Activated CD4-positive, alpha-beta T cell treated with anti-CD3 and anti-CD28 coated beads for 36 hours (primary cell): ENCODE measurements at regions of chr7 and their contacts with region 1.

Region 1: DNA sequence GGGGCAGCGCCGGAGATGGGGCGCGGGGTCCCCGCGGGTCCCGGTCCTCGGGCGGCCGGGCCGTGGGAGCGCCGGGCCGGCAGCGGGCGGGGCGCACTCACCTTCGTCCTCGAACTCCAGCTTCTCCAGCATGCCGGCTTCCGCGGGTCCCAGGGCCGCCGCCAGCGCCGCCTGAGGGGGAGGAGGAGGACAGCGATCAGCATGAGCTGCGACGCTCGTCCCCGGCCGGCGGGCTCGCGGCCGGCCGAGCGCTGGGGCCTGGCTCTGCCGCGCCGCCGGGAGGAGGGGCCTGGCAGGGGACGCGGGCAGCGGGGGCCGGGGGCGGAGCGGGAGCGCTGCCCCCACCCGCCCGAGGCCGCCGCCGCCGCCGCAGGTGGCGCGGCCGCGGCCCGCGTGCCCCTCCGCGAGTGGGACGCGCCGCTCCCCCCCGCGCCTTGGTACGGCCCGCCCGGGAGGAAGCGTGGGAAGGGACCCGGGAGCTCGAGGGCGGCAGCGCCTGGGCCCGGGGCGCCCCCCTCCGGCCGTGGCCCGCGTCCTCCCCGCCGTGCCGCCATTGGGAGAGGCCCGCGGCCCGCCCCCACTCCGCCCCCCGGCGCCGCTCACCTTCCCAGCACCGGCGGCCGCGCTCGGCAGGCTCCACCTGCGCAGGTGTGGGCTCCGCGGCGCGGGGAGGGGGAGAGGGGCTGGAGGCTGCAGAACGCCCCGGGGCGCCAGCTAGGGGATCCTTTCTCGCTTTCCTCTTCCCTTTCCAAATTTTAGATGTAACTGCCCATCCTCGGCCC is 112.5 kb upstream of the RHEB start:
- DNase-seq: peak; percentile 91
- ATAC-seq: peak; percentile 72
- H3K4me3 Mint-ChIP-seq: peak overlapping the region; percentile 92
- H3K27ac Mint-ChIP-seq: peak overlapping the region; percentile 98
- H3K4me1 Mint-ChIP-seq: peaks cover 22% of the 10 kb centered on the region
- H3K27me3 Mint-ChIP-seq: no peaks in the 10 kb centered on the region

Region 2: DNA sequence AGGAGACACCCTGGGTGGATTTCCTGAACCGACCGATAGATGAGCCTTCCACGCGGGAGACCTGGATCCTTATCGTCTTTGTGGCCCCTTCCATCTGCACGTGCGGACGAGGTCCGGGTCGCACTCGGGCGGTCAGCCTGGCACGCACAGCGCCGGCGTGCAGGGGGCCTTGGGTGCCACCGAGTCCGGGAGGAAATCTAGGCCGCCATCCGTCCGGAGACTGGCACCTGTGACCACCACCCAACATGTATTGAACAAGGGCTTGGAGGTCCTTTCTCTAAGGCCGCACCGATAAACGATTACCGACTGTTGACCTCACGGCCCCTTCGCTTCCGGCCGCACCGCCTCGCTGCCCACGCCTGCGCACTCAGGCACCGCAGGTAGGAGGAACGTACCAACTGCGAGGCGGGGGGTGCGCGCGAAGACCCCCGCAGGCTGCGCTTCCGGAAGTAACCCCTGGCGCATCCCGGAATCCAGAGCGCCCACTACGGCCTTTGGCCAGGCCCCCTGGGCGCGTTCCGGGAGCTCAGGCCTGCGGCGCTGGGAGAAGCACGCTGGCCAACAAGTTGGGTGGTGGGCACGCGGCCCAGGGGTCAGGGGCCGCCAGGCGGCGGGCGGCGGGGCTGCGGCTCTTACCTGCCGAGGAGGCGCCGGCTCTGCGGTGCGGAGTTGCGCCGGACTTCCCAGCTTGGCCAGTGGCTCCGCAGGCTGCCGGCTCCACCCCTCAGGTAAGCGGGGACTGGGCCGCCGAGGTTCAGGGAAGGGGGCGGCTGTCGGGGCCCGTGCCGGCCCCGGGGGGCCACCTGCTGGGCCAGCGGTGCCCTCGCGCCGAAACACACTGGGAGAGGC is 1309.1 kb before region 1 on chr7 and contains the starts of genes ACTR3C and LRRC61:
- CTCF ChIA-PET with region 1: no interaction called
- POLR2A ChIA-PET with region 1: no interaction called
- intact Hi-C with region 1: loop called in 1 of 2 experiments (anchors 5 kb)
- DNase-seq: peak; percentile 78
- ATAC-seq: peak; percentile 24
- H3K4me3 Mint-ChIP-seq: peak within 1 kb of the TSS; percentile 91
- H3K27ac Mint-ChIP-seq: peak within 1 kb of the TSS; percentile 99
- H3K4me1 Mint-ChIP-seq: peaks cover 52% of the 10 kb centered on the region
- H3K27me3 Mint-ChIP-seq: no peaks in the 10 kb centered on the region
- total RNA-seq, gene ACTR3C: 3.2 to 4.7 TPM
- total RNA-seq, gene LRRC61: 13.0 to 17.4 TPM

Region 3: GRCh38 chr7:151232091-151232916 is 399.9 kb before region 1 on chr7 and contains the start of gene CHPF2:
- CTCF ChIA-PET with region 1: no interaction called
- POLR2A ChIA-PET with region 1: interaction called, 3 read pairs
- intact Hi-C with region 1: loop called in 1 of 2 experiments (anchors 2 kb)
- DNase-seq: peak; percentile 95
- ATAC-seq: peak; percentile 90
- H3K4me3 Mint-ChIP-seq: peak within 1 kb of the TSS; percentile 98
- H3K27ac Mint-ChIP-seq: peak within 1 kb of the TSS; percentile 99
- H3K4me1 Mint-ChIP-seq: peaks cover 34% of the 10 kb centered on the region
- H3K27me3 Mint-ChIP-seq: no peaks in the 10 kb centered on the region
- total RNA-seq, gene CHPF2: 20.7 to 27.3 TPM

Region 4: DNA sequence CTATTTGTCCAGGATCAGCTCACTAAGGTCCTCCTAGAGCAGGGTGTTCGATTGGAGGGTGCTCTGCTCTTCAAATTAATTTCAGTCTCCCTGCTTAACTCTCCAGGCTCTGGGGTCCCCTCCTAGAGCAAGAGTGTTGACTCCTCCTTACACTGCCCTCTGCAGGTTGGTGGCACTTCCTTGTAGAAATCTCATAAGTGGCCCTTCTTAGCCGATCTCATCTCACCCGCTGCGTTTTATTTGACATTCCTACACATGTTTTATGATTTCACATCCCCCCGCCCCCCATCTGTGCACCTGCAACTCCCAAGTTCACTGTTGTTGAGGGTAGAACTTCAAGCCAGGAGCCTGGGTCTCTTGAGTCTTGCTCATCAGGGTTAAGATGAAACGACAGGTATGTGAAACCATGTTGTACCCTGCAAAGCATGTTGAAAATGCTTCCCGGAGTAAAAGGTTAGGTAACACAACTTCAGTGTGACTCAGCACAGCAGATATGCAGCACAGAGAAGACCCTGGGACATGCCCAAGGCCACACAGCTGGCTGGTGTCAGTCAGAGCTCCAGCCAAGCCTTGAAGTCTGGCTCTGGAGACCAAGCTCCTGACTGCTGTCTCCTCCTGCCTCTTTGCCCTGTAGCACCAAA is 73.6 kb after region 1 on chr7:
- CTCF ChIA-PET with region 1: no interaction called
- POLR2A ChIA-PET with region 1: no interaction called
- intact Hi-C with region 1: loop called in 1 of 2 experiments (anchors 2 kb)
- DNase-seq: peak; percentile 56
- ATAC-seq: peak; percentile 76
- H3K4me3 Mint-ChIP-seq: no peak overlapping the region
- H3K27ac Mint-ChIP-seq: no peak overlapping the region
- H3K4me1 Mint-ChIP-seq: peaks cover 8% of the 10 kb centered on the region
- H3K27me3 Mint-ChIP-seq: no peaks in the 10 kb centered on the region

Region 5: GRCh38 chr7:151795168-151795811 is 163.1 kb after region 1 on chr7:
- CTCF ChIA-PET with region 1: no interaction called
- POLR2A ChIA-PET with region 1: no interaction called
- intact Hi-C with region 1: loop called in 1 of 2 experiments (anchors 1 kb)
- DNase-seq: peak; percentile 94
- ATAC-seq: peak; percentile 93
- H3K4me3 Mint-ChIP-seq: no peak overlapping the region
- H3K27ac Mint-ChIP-seq: peak overlapping the region; percentile 67
- H3K4me1 Mint-ChIP-seq: peaks cover 33% of the 10 kb centered on the region
- H3K27me3 Mint-ChIP-seq: no peaks in the 10 kb centered on the region

Region 6: DNA sequence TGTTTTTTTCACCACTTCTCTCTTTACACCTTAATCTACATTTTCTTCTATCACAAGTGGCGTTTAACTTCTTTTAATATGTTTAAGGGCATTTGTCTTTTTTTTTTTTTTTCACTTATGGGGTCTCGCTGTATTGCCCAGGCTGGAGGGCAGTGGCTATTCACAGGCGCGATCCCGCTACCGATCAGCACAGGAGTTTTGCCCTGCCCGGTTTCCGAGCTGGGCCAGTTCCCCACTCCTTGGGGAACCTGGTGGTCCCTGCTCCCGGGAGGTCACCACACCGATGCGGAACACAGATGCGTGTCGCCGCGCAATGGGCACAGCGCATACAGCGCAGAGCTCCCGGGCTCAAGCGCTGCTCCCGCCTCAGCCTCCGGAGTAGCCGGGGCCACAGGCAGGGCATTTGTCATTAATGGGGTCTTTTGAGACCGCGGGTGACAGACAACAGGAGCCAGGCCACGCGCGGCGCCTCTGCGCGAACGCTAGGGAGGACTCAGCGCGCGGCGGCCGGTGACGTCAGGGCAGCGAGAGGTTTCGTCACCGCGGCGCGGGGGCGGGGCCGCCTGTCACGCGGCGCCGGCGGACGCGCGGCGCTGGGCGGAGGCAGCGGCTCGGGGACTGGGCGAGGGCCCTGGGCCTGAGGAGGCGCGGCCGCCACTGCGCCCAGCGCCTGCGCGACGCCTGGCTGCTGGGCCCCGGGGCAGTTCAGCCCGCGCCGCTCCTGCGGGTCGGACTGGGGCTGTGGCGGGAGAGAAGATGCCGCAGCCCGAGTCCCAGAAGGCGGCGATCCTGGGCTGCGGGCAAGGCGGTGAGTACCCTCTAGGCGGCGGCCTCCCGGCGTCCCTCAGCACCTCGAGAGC is 393.1 kb after region 1 on chr7 and contains the start of gene GALNT11:
- CTCF ChIA-PET with region 1: no interaction called
- POLR2A ChIA-PET with region 1: no interaction called
- intact Hi-C with region 1: loop called in 1 of 2 experiments (anchors 1 kb)
- DNase-seq: peak; percentile 93
- ATAC-seq: peak; percentile 96
- H3K4me3 Mint-ChIP-seq: peak within 1 kb of the TSS; percentile 73
- H3K27ac Mint-ChIP-seq: peak within 1 kb of the TSS; percentile 85
- H3K4me1 Mint-ChIP-seq: peaks cover 35% of the 10 kb centered on the region
- H3K27me3 Mint-ChIP-seq: no peaks in the 10 kb centered on the region
- total RNA-seq, gene GALNT11: 22.0 to 24.8 TPM